Activated B cell treated with CpG ODN at 0.5 μM for 24 hours (primary cell): ENCODE measurements at regions of chr10 and their contacts with region 1.

Region 1: DNA sequence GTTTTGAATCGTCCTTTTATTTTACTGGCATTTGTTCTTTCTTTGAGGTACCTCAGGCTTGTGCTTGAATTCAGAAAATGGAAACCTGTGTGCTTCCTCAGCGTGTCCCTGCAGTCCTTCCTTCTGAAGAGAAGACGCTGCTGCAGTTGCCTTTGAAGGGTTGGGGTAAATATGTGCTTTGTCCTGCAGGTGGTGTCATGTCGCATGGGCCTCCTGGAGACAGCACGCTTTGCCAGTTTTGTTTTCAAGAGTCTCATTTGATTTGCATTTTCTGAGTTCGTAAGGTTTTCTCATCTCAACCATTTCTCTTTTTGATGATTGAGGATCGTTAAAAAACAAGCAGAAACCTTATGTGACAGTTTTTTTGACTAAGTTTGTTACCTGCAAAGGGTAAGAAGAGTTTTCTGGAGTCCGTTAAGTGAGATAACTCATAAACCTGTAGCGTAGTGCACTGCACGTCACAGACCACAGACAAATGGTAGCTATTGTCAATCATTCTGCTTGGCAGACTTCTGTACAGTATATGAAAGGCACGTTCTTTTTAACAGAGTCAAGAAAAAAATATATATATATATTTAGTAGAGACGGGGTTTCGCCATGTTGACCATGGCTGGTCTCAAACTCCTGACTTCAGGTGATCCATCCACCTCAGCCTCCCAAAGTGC is 57.0 kb downstream of the CDC123 start:
- DNase-seq: no peak
- ATAC-seq: peak; percentile 98
- H3K4me3 Mint-ChIP-seq: peak overlapping the region; percentile 55
- H3K27ac Mint-ChIP-seq: peak overlapping the region; percentile 74
- H3K4me1 Mint-ChIP-seq: peaks cover 10% of the 10 kb centered on the region
- H3K27me3 Mint-ChIP-seq: no peaks in the 10 kb centered on the region
- CTCF ChIP-seq: peak; percentile 21

Region 2: DNA sequence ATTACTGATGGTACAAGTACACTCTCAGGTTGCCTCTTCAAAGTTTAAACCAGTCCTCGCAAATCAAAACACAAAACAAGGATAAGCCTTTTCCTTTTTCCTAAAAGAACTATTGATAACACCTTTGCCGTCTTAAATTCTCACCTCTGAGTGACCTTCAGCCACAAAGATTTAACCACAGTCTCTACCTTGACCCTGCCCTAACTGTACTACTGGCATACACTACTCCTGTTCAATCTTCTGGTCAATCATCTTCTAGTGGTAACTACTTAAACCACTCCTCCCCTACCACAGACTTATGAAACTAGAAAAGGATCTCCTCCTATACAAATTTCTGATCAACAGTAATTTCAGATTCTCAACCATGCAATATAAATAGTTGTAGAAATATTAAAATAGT is 225.5 kb before region 1 on chr10:
- CTCF ChIA-PET with region 1: no interaction called
- POLR2A ChIA-PET with region 1: no interaction called
- intact Hi-C with region 1: no loop called
- DNase-seq: no peak
- ATAC-seq: no peak
- H3K4me3 Mint-ChIP-seq: no peak overlapping the region
- H3K27ac Mint-ChIP-seq: no peak overlapping the region
- H3K4me1 Mint-ChIP-seq: peaks cover 22% of the 10 kb centered on the region
- H3K27me3 Mint-ChIP-seq: no peaks in the 10 kb centered on the region
- CTCF ChIP-seq: no peak

Region 3: DNA sequence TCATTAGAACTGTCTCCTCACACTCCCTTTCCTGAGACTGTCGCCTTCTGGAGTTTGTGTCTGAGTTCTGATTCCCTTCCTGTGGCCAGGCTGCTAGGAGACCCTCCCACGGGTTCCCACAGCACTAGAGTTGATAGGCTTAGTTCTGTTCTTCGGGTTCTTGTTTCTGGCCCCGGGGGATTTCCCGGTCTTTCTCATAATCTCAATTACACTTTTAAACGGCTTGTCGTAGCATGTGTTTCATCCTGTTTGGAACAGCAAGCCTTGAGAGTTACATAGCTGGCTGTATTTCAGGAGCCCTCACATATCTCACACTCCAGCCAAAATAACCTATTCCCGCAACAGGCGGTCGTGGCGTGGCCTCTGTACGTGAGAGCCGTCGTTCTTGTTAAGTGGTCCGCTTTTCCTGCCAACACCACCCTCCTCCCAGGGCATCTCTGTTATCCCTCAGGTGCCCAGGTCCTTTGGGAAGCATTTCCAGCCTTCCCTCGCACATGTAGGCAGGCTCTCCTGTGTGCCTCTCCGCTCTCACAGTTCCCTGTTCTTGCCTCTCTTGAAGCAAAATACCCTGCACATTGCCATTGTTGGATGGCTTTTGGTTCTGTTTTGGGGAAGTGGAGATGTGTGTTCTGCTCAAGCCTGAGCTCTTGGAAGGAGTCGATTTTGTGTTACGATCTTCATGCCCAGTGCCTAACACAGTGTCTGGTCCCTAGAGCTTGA is 11.0 kb before region 1 on chr10:
- CTCF ChIA-PET with region 1: no interaction called
- POLR2A ChIA-PET with region 1: interaction called, 3 read pairs
- intact Hi-C with region 1: loop called (anchors 1 kb)
- DNase-seq: no peak
- ATAC-seq: no peak
- H3K4me3 Mint-ChIP-seq: peak overlapping the region; percentile 29
- H3K27ac Mint-ChIP-seq: peak overlapping the region; percentile 75
- H3K4me1 Mint-ChIP-seq: peaks cover 69% of the 10 kb centered on the region
- H3K27me3 Mint-ChIP-seq: no peaks in the 10 kb centered on the region
- CTCF ChIP-seq: no peak

Region 4: DNA sequence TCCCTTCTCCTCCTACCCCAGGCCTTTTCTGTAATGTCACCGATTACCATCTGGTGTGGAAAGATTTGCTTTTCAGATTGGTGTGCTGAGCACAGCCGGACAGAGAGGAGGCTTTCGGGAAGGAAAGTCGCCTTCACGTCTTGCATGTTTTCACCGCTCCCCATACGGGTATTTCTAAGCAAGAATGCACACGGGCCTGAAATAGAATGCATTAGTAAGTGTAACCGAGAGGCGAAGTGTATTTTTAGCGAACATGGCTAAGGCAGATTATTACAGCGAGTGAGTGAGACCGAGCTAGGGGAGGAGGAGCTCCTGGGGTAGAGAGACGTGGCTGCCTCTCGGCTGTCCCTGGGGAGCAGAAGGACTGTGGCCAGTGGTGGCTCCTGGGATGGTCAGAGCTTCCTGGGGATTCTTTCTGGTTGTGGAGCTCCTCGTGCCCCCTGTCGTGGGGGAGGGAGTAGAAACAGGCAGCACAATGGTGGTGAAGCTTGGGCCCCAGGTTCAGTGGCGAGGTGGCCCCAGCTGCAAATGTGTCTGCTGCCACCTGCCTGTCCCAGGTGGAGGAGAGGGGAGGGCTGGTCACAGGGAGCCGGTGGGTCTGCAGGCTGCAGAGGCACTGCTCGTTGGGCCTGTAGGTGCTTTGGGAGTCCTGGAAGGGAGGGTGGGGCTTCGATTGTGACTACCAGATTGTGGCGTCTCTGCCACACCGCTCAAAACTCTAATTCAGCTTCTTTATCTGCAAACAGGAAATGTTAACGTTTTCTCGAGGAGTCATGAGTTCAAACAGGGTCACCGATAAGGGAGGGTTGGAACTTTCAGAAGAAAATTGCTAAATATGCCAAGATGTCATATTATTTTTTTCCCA is 232.2 kb after region 1 on chr10:
- CTCF ChIA-PET with region 1: interaction called, 5 read pairs
- POLR2A ChIA-PET with region 1: interaction called, 3 read pairs
- intact Hi-C with region 1: loop called (anchors 1 kb)
- DNase-seq: peak; percentile 29
- ATAC-seq: peak; percentile 73
- H3K4me3 Mint-ChIP-seq: peak overlapping the region; percentile 71
- H3K27ac Mint-ChIP-seq: peak overlapping the region; percentile 78
- H3K4me1 Mint-ChIP-seq: peaks cover 63% of the 10 kb centered on the region
- H3K27me3 Mint-ChIP-seq: no peaks in the 10 kb centered on the region
- CTCF ChIP-seq: no peak

Region 5: GRCh38 chr10:12579954-12580858 is 327.2 kb after region 1 on chr10:
- CTCF ChIA-PET with region 1: no interaction called
- POLR2A ChIA-PET with region 1: no interaction called
- intact Hi-C with region 1: no loop called
- DNase-seq: no peak
- ATAC-seq: peak; percentile 21
- H3K4me3 Mint-ChIP-seq: no peak overlapping the region
- H3K27ac Mint-ChIP-seq: peak overlapping the region; percentile 5
- H3K4me1 Mint-ChIP-seq: peaks cover 29% of the 10 kb centered on the region
- H3K27me3 Mint-ChIP-seq: no peaks in the 10 kb centered on the region
- CTCF ChIP-seq: no peak

Region 6: GRCh38 chr10:12902135-12902572 is 649.1 kb after region 1 on chr10:
- CTCF ChIA-PET with region 1: interaction called, 6 read pairs
- POLR2A ChIA-PET with region 1: no interaction called
- intact Hi-C with region 1: loop called (anchors 2 kb)
- DNase-seq: peak; percentile 18
- ATAC-seq: no peak
- H3K4me3 Mint-ChIP-seq: no peak overlapping the region
- H3K27ac Mint-ChIP-seq: no peak overlapping the region
- H3K4me1 Mint-ChIP-seq: no peaks in the 10 kb centered on the region
- H3K27me3 Mint-ChIP-seq: peaks cover 23% of the 10 kb centered on the region
- CTCF ChIP-seq: peak; percentile 82